GM12878 (cell line): ENCODE measurements at regions of chr9 and their contacts with region 1.

Region 1: DNA sequence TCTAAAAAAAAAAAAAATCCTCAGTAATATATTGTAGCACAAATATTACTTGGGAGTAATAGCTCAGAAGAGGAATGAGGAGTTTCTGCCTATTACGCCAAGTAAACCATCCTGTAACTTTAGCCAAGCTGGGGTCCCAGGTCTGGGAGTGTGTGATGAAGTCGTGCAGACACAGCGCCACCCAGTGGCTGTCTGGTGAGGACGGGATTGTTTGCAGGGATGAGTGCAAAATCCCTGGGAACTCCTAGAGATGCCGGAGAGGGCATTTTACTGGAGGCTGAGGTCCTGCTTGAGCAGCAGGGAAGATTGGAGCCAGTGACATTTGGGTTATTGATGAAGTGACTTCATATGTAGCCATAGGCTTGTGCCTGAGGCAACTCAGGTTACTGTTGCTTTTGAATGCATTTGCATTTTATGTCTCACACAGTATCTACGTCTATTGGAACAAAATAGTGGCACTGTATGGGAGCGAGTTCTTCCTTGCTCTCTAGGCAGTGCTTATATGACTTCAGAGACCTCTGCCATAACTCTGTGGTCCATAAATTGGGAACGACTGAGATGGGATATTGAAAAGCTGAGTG is 72.8 kb downstream of the PSAT1 start:
- DNase-seq: no peak
- ATAC-seq: peak; percentile 91
- H3K4me3 ChIP-seq: no peak overlapping the region
- H3K27ac ChIP-seq: no peak overlapping the region
- H3K4me1 ChIP-seq: no peaks in the 10 kb centered on the region
- H3K27me3 ChIP-seq: peaks cover 0 to 2% of the 10 kb centered on the region in 2 experiments; a peak in 1 of 4 replicates
- CTCF ChIP-seq: peak; percentile 78 to 88 (median 86)
- EP300 ChIP-seq: no peak
- POLR2A ChIP-seq: no peak
- RAD21 ChIP-seq: peak; percentile 80

Region 2: GRCh38 chr9:77827104-77827784 is 542.5 kb before region 1 on chr9:
- CTCF ChIA-PET with region 1: no interaction called
- POLR2A ChIA-PET with region 1: no interaction called
- RAD21 ChIA-PET with region 1: no interaction called
- SMC1A ChIA-PET with region 1: interaction called, 3 read pairs
- in situ Hi-C with region 1: no loop called
- intact Hi-C with region 1: loop called (anchors 5 kb)
- DNase-seq: peak; percentile 21
- ATAC-seq: peak; percentile 81
- H3K4me3 ChIP-seq: no peak overlapping the region
- H3K27ac ChIP-seq: no peak overlapping the region
- H3K4me1 ChIP-seq: peaks cover 3% of the 10 kb centered on the region; the same call in 1 of the 2 replicates
- H3K27me3 ChIP-seq: no peaks in the 10 kb centered on the region; a peak in 1 of 4 replicates
- CTCF ChIP-seq: no peak
- EP300 ChIP-seq: no peak
- POLR2A ChIP-seq: no peak
- RAD21 ChIP-seq: no peak

Region 3: GRCh38 chr9:78249542-78249941 is 120.2 kb before region 1 on chr9:
- CTCF ChIA-PET with region 1: interaction called, 11 read pairs
- POLR2A ChIA-PET with region 1: no interaction called
- RAD21 ChIA-PET with region 1: no interaction called
- SMC1A ChIA-PET with region 1: no interaction called
- in situ Hi-C with region 1: no loop called
- intact Hi-C with region 1: no loop called
- DNase-seq: no peak
- ATAC-seq: no peak
- H3K4me3 ChIP-seq: no peak overlapping the region
- H3K27ac ChIP-seq: no peak overlapping the region
- H3K4me1 ChIP-seq: no peaks in the 10 kb centered on the region
- H3K27me3 ChIP-seq: no peaks in the 10 kb centered on the region
- CTCF ChIP-seq: no peak
- EP300 ChIP-seq: no peak
- POLR2A ChIP-seq: no peak
- RAD21 ChIP-seq: no peak

Region 4: GRCh38 chr9:78267889-78268288 is 101.8 kb before region 1 on chr9:
- CTCF ChIA-PET with region 1: interaction called, 85 read pairs
- POLR2A ChIA-PET with region 1: no interaction called
- RAD21 ChIA-PET with region 1: interaction called, 19 read pairs
- SMC1A ChIA-PET with region 1: interaction called, 26 read pairs
- in situ Hi-C with region 1: loop called (anchors 5 kb)
- intact Hi-C with region 1: no loop called
- DNase-seq: no peak
- ATAC-seq: no peak
- H3K4me3 ChIP-seq: no peak overlapping the region
- H3K27ac ChIP-seq: no peak overlapping the region
- H3K4me1 ChIP-seq: no peaks in the 10 kb centered on the region
- H3K27me3 ChIP-seq: no peaks in the 10 kb centered on the region
- CTCF ChIP-seq: no peak
- EP300 ChIP-seq: no peak
- POLR2A ChIP-seq: no peak
- RAD21 ChIP-seq: no peak

Region 5: GRCh38 chr9:78296893-78297671 is 72.6 kb before region 1 on chr9 and contains the start of gene PSAT1:
- CTCF ChIA-PET with region 1: interaction called, 10 read pairs
- POLR2A ChIA-PET with region 1: no interaction called
- RAD21 ChIA-PET with region 1: no interaction called
- SMC1A ChIA-PET with region 1: no interaction called
- in situ Hi-C with region 1: no loop called
- intact Hi-C with region 1: no loop called
- DNase-seq: peak; percentile 72
- ATAC-seq: peak; percentile 98
- H3K4me3 ChIP-seq: peak within 1 kb of the TSS; percentile 83
- H3K27ac ChIP-seq: peak within 1 kb of the TSS; percentile 69
- H3K4me1 ChIP-seq: peaks cover 7% of the 10 kb centered on the region
- H3K27me3 ChIP-seq: no peaks in the 10 kb centered on the region
- CTCF ChIP-seq: peak in 1 of 3 experiments; percentile 19; a peak in 2 of 6 replicates
- EP300 ChIP-seq: no peak
- POLR2A ChIP-seq: peak; percentile 92
- RAD21 ChIP-seq: no peak
- polyA plus RNA-seq, gene PSAT1: 53.6 to 70.2 TPM

Region 6: DNA sequence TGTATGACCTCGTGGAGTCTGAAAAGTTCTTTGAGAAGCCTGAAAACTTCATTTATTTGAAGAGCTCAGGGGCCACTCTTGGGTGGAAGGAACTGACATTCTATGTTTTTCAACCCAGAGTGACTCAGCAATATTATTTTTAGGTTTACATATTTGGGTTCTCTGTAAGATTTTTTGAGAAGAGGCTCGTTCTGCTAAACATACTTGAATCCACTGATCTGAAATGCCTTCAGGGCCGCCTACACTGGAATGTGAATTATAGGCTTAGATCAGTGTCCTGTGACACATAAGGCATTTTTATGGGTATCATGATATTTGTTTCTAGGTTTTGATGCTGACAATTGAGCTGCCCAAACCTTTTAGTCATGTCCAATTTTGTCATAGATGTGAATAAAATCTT is 13.4 kb after region 1 on chr9:
- CTCF ChIA-PET with region 1: interaction called, 21 read pairs
- POLR2A ChIA-PET with region 1: no interaction called
- RAD21 ChIA-PET with region 1: no interaction called
- SMC1A ChIA-PET with region 1: no interaction called
- in situ Hi-C with region 1: no loop called
- intact Hi-C with region 1: no loop called
- DNase-seq: no peak
- ATAC-seq: no peak
- H3K4me3 ChIP-seq: no peak overlapping the region
- H3K27ac ChIP-seq: no peak overlapping the region
- H3K4me1 ChIP-seq: no peaks in the 10 kb centered on the region
- H3K27me3 ChIP-seq: no peaks in the 10 kb centered on the region
- CTCF ChIP-seq: no peak
- EP300 ChIP-seq: no peak
- POLR2A ChIP-seq: no peak
- RAD21 ChIP-seq: no peak

Region 7: DNA sequence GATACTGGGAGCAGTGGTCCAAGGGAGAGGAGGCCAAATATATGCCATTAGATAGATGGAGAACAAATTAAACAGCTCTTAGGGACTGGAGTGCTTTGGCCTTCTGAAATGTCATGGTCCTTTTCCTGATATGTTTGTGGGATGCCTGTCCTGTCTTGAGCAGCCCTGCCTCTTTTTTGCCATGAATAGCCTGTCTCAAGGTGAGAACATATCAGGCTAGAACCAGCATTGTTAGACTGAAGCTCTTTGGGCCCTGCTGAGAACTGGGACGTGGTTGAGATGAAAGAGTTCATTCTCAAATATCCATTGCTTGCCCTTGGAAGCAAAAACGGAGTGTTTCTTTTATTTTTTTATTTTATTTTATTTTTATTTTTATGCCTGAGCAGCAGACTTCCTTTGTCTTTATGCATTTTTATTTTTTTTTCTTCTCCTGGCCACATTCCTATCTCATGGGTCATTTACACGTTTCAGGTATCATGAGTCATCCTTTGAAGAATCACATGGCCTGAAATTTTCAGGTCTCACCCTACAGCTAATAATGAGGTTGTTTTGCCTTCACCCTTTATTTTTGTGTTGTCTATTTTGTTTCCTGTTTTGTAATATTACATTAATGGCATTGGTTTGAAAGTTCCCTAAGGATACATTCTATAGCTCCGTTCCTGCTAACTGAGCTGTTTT is 298.6 kb after region 1 on chr9:
- CTCF ChIA-PET with region 1: no interaction called
- POLR2A ChIA-PET with region 1: no interaction called
- RAD21 ChIA-PET with region 1: no interaction called
- SMC1A ChIA-PET with region 1: no interaction called
- in situ Hi-C with region 1: no loop called
- intact Hi-C with region 1: no loop called
- DNase-seq: no peak
- ATAC-seq: no peak
- H3K4me3 ChIP-seq: no peak overlapping the region
- H3K27ac ChIP-seq: no peak overlapping the region
- H3K4me1 ChIP-seq: no peaks in the 10 kb centered on the region
- H3K27me3 ChIP-seq: no peaks in the 10 kb centered on the region
- CTCF ChIP-seq: no peak
- EP300 ChIP-seq: no peak
- POLR2A ChIP-seq: no peak
- RAD21 ChIP-seq: no peak